Gastrocnemius medialis (tissue), 4 donors: ENCODE measurements at regions of chr2 and their contacts with region 1.

Region 1: DNA sequence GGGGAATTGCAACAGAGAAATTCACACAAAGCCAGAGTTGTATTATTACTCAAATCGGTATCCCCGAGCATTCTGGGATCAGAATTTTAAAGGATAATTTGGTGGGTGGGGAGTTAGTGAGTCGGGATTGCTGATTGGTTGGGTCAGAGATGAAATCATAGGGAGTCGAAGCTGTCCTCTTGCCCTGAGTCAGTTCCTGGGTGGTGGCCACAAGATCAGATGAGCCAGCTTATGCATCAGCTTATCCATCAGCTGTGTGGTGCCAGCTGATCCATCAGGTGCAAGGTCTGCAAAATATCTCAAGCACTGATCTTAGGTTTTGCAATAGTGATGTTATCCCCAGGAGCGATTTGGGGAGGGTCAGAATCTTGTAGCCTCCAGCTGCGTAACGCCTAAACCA is 34.3 kb upstream of the ITM2C start:
- DNase-seq: no peak
- ATAC-seq: no peak
- H3K4me3 ChIP-seq: no peak overlapping the region
- H3K27ac ChIP-seq: no peak overlapping the region
- H3K4me1 ChIP-seq: peaks cover 0 to 3% of the 10 kb centered on the region in 2 donors
- H3K27me3 ChIP-seq: peaks cover 17 to 21% (median 21%) of the 10 kb centered on the region in 3 donors
- CTCF ChIP-seq: no peak
- POLR2A ChIP-seq: no peak

Region 2: GRCh38 chr2:229282758-229283546 is 1547.5 kb before region 1 on chr2:
- in situ Hi-C with region 1: no loop called
- intact Hi-C with region 1: no loop called
- DNase-seq: peak in 1 of 2 donors; percentile 61
- ATAC-seq: peak; percentile 89 to 93
- H3K4me3 ChIP-seq: no peak overlapping the region
- H3K27ac ChIP-seq: peak overlapping the region in 1 of 4 donors; percentile 12
- H3K4me1 ChIP-seq: no peaks in the 10 kb centered on the region
- H3K27me3 ChIP-seq: no peaks in the 10 kb centered on the region
- CTCF ChIP-seq: no peak
- POLR2A ChIP-seq: no peak

Region 3: GRCh38 chr2:230974096-230974913 is 143.9 kb after region 1 on chr2:
- in situ Hi-C with region 1: loop called in 1 of 4 experiments (anchors 5 kb)
- intact Hi-C with region 1: no loop called
- DNase-seq: no peak
- ATAC-seq: no peak
- H3K4me3 ChIP-seq: no peak overlapping the region
- H3K27ac ChIP-seq: no peak overlapping the region
- H3K4me1 ChIP-seq: no peaks in the 10 kb centered on the region
- H3K27me3 ChIP-seq: no peaks in the 10 kb centered on the region
- CTCF ChIP-seq: no peak
- POLR2A ChIP-seq: no peak